ENCODE measurements at regions of chr19 and their contacts with region 1.

Region 1: DNA sequence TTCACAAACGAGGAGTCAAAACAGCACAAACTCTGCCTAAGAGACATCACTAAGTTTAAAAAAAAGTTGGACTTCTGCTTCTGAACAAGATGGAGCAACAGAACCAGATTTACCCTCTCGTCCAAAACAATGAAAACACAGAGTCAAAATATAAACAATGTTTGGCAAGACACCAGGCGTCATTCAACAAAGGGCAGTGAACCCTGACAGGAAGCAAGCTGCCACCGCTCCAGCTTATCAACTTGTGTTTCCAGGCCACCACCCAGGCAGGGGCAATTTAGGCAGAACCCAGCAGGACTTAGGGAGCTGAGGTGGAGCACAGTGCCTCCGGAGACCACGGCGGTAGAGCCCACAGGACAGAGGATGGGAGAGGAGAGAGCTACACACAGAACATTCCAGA is 8.6 kb upstream of the NAPA start:
- DNase-seq: no peak
- ATAC-seq: no peak
- H3K4me3 ChIP-seq: no peak overlapping the region
- H3K27ac ChIP-seq: no peak overlapping the region
- H3K4me1 ChIP-seq: no peaks in the 10 kb centered on the region
- H3K27me3 ChIP-seq: no peaks in the 10 kb centered on the region
- CTCF ChIP-seq: no peak

Region 2: DNA sequence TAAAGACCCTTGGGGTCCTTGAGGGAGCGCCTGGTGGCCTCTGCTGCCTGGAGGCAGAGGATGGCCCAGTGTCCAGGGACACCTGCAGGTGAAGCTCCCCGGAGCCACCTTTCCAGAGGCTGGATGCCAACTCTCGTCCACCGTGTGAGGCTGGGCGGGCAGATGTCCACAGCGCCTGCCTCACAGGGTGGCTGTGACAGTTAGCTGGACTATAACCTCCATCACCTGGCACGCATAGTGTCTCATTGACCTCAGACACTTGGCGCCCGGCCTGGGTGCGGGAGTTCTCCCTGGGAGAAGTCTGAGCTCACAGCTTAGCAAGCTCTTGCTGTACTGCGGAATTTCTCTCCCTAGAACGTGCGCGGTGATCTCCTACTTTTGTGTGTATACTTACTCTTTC is 95.3 kb after region 1 on chr19:
- CTCF ChIA-PET with region 1: no interaction called
- POLR2A ChIA-PET with region 1: no interaction called
- intact Hi-C with region 1: no loop called
- DNase-seq: no peak
- ATAC-seq: no peak
- H3K4me3 ChIP-seq: no peak overlapping the region
- H3K27ac ChIP-seq: no peak overlapping the region
- H3K4me1 ChIP-seq: no peaks in the 10 kb centered on the region
- H3K27me3 ChIP-seq: no peaks in the 10 kb centered on the region
- CTCF ChIP-seq: no peak

Region 3: GRCh38 chr19:47682939-47683338 is 159.5 kb after region 1 on chr19:
- CTCF ChIA-PET with region 1: no interaction called
- POLR2A ChIA-PET with region 1: interaction called, 18 read pairs
- intact Hi-C with region 1: no loop called
- DNase-seq: no peak
- ATAC-seq: no peak
- H3K4me3 ChIP-seq: no peak overlapping the region
- H3K27ac ChIP-seq: no peak overlapping the region
- H3K4me1 ChIP-seq: no peaks in the 10 kb centered on the region
- H3K27me3 ChIP-seq: no peaks in the 10 kb centered on the region
- CTCF ChIP-seq: no peak